OCI-LY7 (cell line): ENCODE measurements at regions of chr1 and their contacts with region 1.

Region 1: GRCh38 chr1:228457396-228458176 is 29.6 kb upstream of the RNF187 start:
- DNase-seq: peak; percentile 99
- H3K4me3 ChIP-seq: peak overlapping the region; percentile 78
- H3K27ac ChIP-seq: peak overlapping the region; percentile 94
- H3K4me1 ChIP-seq: peaks cover 39% of the 10 kb centered on the region
- CTCF ChIP-seq: peak; percentile 57; the same call in 1 of the 2 replicates

Region 2: DNA sequence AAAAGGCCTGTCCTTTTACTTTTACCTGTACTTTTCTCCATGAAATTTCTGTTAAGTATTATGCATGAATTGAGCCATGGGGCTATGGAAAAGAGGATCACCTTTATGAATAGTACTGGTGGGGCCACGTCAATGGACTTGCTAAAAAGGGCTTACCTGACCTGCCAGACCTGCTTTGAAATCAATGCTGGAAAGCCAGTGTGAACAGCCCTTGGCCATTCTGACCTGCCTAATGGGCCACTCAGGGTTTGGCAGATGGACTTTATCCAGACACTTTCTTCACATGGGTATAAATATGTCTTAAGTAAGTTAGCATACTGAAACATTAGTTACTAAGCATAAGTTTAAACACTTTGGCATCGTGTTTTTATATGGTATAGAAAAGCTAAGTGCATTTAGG is 325.8 kb before region 1 on chr1:
- CTCF ChIA-PET with region 1: no interaction called
- POLR2A ChIA-PET with region 1: no interaction called
- intact Hi-C with region 1: loop called (anchors 2 kb)
- DNase-seq: no peak
- H3K4me3 ChIP-seq: no peak overlapping the region
- H3K27ac ChIP-seq: no peak overlapping the region
- H3K4me1 ChIP-seq: peaks cover 12% of the 10 kb centered on the region
- CTCF ChIP-seq: no peak

Region 3: DNA sequence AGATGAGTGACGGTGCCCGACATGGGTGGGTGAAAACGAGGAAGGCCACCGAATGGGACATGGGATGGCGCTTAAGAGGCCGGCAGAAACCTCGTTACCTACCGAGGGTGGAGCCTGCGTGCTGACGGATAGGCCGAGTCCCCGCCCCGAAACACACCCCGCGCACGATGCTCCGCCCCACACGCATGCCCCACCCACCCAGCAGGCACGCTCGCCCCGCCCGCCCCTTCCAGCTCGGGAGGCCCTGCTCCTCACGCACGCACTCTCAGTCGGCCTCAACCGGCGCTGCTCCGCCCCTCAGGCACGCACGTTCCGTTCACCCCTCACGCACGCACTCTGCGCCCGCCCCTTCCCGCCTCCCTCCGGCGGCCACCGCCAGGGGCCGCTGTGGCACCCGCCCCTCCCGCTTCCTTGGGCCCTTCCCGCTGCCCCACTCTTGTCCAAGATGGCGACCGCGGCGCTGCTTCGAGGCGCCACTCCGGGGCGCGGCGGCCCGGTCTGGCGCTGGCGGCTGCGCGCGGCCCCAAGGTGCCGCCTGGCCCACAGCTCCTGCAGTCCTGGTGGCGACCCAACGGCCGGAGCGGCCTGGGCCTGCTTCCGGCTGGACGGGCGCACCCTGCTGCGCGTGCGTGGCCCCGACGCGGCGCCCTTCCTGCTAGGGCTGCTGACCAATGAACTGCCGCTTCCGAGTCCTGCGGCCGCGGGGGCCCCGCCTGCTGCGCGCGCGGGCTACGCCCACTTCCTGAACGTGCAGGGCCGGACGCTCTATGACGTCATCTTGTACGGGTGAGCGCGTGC is 292.0 kb before region 1 on chr1 and contains the start of gene IBA57:
- CTCF ChIA-PET with region 1: no interaction called
- POLR2A ChIA-PET with region 1: no interaction called
- intact Hi-C with region 1: loop called (anchors 2 kb)
- DNase-seq: peak; percentile 99
- H3K4me3 ChIP-seq: peak within 1 kb of the TSS; percentile 86
- H3K27ac ChIP-seq: peak within 1 kb of the TSS; percentile 83
- H3K4me1 ChIP-seq: peaks cover 25% of the 10 kb centered on the region
- CTCF ChIP-seq: peak; percentile 74
- total RNA-seq, gene IBA57: 3.2 and 9.9 TPM in 2 replicates

Region 4: DNA sequence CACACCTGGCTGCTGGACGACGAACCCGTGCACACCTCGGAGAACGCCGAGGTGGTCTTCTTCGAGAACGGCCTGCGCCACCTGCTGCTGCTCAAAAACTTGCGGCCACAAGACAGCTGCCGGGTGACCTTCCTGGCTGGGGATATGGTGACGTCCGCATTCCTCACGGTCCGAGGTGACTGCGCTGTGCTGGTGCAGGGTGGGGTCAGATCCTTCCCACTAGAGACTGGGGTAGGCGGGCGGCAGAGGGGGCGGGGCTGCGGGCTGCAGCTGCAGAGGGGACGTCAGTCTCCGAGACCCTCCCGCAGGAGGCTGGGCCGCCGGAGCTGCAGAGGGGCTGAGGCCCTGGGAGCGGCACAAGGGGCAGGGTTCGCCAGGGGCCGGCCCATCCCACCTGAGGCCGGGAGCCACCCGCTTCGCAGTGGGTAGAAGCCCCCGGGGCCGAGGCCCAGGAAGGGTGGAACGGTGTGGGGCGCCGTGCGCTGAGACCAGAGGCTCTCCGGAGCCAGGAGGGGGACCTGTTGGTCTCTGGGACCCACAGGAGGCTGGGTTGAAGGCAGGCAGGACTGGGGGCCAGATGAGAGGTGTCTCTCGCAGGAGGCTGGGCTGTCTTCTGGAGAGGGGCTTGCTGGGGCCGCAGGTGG is 141.5 kb before region 1 on chr1:
- CTCF ChIA-PET with region 1: no interaction called
- POLR2A ChIA-PET with region 1: no interaction called
- intact Hi-C with region 1: no loop called
- DNase-seq: no peak
- H3K4me3 ChIP-seq: no peak overlapping the region
- H3K27ac ChIP-seq: no peak overlapping the region
- H3K4me1 ChIP-seq: no peaks in the 10 kb centered on the region
- CTCF ChIP-seq: no peak

Region 5: GRCh38 chr1:228340686-228341449 is 116.7 kb before region 1 on chr1:
- CTCF ChIA-PET with region 1: no interaction called
- POLR2A ChIA-PET with region 1: no interaction called
- intact Hi-C with region 1: loop called (anchors 10 kb)
- DNase-seq: peak; percentile 23
- H3K4me3 ChIP-seq: no peak overlapping the region
- H3K27ac ChIP-seq: no peak overlapping the region
- H3K4me1 ChIP-seq: no peaks in the 10 kb centered on the region
- CTCF ChIP-seq: peak; percentile 64

Region 6: GRCh38 chr1:228478912-228479711 is 21.5 kb after region 1 on chr1:
- CTCF ChIA-PET with region 1: no interaction called
- POLR2A ChIA-PET with region 1: interaction called, 12 read pairs
- intact Hi-C with region 1: no loop called
- DNase-seq: peak; percentile 67
- H3K4me3 ChIP-seq: peak overlapping the region; percentile 44
- H3K27ac ChIP-seq: peak overlapping the region; percentile 53
- H3K4me1 ChIP-seq: peaks cover 28% of the 10 kb centered on the region
- CTCF ChIP-seq: no peak

Region 7: GRCh38 chr1:228968891-228969606 is 511.5 kb after region 1 on chr1:
- CTCF ChIA-PET with region 1: no interaction called
- POLR2A ChIA-PET with region 1: no interaction called
- intact Hi-C with region 1: no loop called
- DNase-seq: no peak
- H3K4me3 ChIP-seq: no peak overlapping the region
- H3K27ac ChIP-seq: no peak overlapping the region
- H3K4me1 ChIP-seq: no peaks in the 10 kb centered on the region
- CTCF ChIP-seq: no peak